Activated CD4-positive, alpha-beta T cell treated with anti-CD3 and anti-CD28 coated beads, Interleukin-2, amount 10 ng/mL, durations not matched to agents 24 days and 14 days (primary cell): ENCODE measurements at regions of chr3 and their contacts with region 1.

Region 1: DNA sequence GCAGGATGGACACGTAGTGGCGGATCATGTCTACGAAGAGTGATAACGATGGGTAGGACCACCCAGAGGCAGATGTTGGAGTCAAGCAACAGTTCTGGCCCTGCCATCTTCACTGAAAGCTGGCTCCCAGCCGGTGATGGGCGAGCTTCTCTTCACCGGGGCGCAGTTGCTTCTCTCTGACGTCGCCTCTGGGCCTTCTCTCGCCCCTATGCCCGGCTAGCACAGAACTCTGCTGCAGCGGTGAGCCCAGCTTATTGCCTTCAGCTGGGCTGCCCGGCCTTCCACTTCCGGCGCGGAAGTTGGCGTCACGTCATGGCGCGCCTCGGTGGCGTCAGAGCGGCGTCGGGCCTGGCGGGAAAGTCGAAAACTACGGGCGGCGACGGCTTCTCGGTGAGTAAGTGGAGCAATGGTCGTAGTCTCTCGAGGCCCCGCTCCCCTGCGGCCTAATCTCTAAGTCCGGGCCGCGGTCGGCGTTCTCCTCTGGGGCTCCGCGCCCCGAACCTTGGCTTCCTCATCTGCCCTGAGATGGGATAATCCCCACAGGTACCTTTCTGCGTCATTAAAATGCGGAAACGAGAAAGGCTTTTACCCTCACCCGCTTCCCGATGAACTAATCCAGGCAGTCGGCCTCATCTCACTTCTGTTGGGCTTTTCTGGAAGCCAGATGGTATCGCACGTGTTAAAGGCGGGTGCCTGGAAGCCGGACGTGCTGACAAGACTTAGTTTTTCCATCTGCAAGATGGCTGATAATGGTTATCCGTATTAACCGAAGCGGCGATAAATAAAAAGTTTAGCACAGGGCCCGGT is at the start of gene FANCD2:
- DNase-seq: peak; percentile 99
- H3K4me3 Mint-ChIP-seq: peak within 1 kb of the TSS; percentile 93
- H3K27ac Mint-ChIP-seq: peak within 1 kb of the TSS; percentile 98
- H3K4me1 Mint-ChIP-seq: peaks cover 18% of the 10 kb centered on the region
- H3K27me3 Mint-ChIP-seq: no peaks in the 10 kb centered on the region
- total RNA-seq, gene FANCD2: 71.4 and 73.8 TPM in 2 replicates

Region 2: DNA sequence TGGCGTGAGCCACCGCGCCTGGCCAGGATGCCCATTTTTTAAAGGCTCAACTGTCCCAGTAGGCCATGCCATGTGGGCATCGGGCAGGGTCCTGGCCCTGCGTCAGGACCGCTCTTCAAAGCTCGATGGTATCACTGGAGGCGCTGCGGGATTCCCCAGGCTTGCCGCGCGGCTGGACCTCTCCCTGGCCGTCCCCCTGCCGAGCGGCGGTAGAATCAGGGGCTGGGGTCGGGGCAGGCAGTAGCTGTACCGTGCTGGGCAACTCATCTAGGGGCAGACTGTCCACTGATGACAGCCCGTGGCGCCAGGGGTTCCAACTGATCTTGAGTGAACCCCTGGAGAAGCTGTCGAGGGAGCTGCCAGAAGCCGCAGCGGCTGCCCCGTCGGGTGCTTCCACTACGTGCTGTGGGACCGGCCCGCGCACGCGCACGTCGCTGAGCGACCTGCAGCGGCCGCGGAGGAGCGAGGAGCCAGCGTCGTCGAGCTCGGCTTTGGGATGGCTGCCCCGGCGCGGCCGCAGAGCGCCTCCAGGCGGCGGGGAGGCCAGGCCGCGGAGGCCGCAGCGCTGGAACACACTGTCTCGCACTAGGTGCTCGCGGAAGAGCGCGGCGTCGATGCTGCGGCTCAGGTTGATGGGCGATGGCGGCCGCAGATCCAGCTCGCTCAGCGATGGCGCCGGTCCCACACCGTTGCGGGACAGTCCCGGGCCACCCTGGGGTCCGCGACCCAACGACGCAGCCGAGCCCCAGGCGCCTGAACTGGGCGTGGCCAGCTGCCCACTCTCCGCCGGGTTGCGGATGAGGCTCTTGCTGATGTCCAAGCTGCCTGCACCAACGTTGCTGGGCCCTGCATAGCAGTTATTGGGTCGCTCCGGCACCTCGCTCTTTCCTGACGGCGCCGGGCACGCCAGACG is 79.9 kb before region 1 on chr3:
- intact Hi-C with region 1: loop called (anchors 1 kb)
- DNase-seq: peak; percentile 97
- H3K4me3 Mint-ChIP-seq: peak overlapping the region; percentile 91
- H3K27ac Mint-ChIP-seq: peak overlapping the region; percentile 87
- H3K4me1 Mint-ChIP-seq: peaks cover 13% of the 10 kb centered on the region
- H3K27me3 Mint-ChIP-seq: no peaks in the 10 kb centered on the region

Region 3: GRCh38 chr3:10010486-10011465 is 15.5 kb before region 1 on chr3:
- intact Hi-C with region 1: loop called (anchors 1 kb)
- DNase-seq: peak; percentile 96
- H3K4me3 Mint-ChIP-seq: peak overlapping the region; percentile 61
- H3K27ac Mint-ChIP-seq: no peak overlapping the region
- H3K4me1 Mint-ChIP-seq: peaks cover 16% of the 10 kb centered on the region
- H3K27me3 Mint-ChIP-seq: peaks cover 2% of the 10 kb centered on the region

Region 4: DNA sequence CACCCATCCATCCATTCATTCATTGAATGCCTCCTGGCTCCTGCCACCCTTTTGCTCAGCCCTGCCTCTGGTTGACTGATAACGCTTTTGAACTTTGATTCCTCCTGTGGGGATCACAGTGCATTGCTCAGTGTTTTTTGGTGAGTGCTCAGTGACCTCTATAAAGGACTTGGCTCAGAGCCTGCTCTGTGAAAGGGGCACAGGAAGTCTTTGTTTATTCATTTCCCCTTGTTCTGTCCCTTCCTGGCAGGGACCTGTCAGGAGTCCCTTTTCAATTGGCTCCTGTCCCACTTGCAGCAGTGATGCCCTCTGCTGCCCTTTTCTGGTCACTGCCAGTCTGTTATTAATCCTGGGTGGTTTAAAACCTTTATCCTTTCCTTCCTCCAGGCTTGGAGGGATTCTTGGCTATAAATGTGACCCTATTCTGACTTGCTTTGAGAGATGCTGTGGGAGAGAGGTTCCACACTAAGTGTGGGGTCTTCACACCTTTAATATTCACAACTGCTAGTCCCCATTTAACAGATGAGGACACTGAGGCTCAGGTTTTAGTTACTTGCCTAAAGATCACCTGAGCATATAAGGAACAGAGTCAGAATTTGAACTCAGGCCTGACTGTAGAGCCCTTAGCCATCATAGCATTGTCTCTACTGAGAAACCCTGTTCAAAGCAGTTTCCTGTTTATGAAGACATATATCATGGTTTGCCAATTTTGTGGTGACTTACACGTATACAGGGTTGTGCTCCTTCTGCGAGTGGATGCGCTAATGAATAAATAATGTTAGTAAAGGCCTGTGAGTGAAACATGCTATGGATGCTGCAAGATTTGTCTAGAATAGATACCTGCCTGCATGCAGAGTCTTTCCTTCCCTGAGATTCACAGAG is 198.7 kb after region 1 on chr3:
- intact Hi-C with region 1: loop called (anchors 10 kb)
- DNase-seq: peak; percentile 89
- H3K4me3 Mint-ChIP-seq: peak overlapping the region; percentile 72
- H3K27ac Mint-ChIP-seq: peak overlapping the region; percentile 89
- H3K4me1 Mint-ChIP-seq: peaks cover 69% of the 10 kb centered on the region
- H3K27me3 Mint-ChIP-seq: no peaks in the 10 kb centered on the region